GM18951 (cell line): ENCODE measurements at regions of chr1 and their contacts with region 1.

Region 1: GRCh38 chr1:246497331-246497915 is 9.7 kb downstream of the SMYD3 start:
- POLR2A ChIP-seq: no peak

Region 2: DNA sequence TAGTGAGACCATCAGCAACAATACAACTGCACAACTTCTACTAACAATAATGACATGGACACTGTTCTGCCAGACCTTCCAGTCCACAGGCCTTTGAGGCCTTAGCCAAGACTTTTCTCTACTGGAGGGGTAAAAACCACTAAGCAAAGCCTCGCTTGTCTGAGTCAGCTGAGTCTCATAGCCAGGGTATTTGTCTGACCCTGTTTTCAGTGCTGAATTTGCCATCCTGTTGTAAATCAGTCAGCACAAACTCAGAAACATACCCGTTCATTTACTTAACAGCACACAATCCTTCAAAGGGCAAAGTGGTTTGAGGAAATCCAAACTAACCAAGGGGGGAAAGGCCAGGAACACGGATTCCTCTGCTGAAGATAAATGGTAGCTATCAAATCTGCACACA is 528.1 kb before region 1 on chr1:
- in situ Hi-C with region 1: no loop called
- POLR2A ChIP-seq: no peak

Region 3: GRCh38 chr1:246527402-246528088 is 30.1 kb after region 1 on chr1:
- in situ Hi-C with region 1: no loop called
- POLR2A ChIP-seq: peak; percentile 22

Region 4: DNA sequence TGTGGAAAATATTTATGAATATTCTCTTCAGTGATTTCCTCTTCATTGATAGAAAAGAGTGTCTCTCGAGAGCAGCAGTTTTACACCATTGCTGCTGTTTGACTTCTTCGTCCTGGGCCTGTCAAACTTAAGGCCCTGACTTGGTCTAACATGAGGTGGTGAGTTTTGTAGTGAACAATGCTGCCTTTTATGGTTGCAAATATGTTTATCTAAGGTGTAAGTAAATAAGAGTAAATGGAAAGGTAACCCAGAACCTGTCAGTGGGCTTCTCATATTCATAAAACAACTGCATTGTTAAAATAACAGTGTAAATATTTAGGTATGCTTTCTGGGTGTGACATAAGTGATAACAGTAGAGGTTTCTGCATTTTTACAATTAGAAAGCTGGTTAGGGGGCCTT is 164.0 kb after region 1 on chr1:
- in situ Hi-C with region 1: no loop called
- POLR2A ChIP-seq: no peak

Region 5: DNA sequence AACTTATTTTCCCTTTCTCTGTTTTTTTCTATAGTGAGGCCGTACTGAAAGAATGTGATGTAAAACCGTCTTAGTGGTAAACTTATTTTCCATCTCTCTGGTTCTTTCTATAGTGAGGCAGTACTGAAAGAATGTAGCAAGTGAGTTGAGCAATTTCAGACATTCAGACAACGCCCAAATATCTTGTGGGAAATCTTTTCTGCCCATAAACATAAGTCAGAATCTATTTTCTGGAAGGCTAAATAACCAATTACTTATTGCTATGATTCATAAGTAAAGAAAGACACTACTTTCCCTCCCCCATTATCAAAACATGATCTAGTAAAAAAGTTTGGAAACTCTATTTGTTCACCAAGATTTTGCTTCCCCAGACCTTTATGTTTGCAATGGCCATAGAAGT is 207.9 kb after region 1 on chr1:
- in situ Hi-C with region 1: loop called (anchors 10 kb)
- POLR2A ChIP-seq: no peak